Activated CD4-positive, alpha-beta memory T cell treated with anti-CD3 and anti-CD28 coated beads, Interleukin-2, amount 10 ng/mL, durations not matched to agents 7 days and 5 days (primary cell): ENCODE measurements at regions of chr19 and their contacts with region 1.

Region 1: GRCh38 chr19:2261438-2262172 is 5.4 kb upstream of the JSRP1 start:
- DNase-seq: peak; percentile 76
- H3K4me3 Mint-ChIP-seq: no peak overlapping the region
- H3K27ac Mint-ChIP-seq: peak overlapping the region; percentile 48
- H3K4me1 Mint-ChIP-seq: peaks cover 41% of the 10 kb centered on the region
- H3K27me3 Mint-ChIP-seq: no peaks in the 10 kb centered on the region

Region 2: GRCh38 chr19:2070436-2070827 is 191.2 kb before region 1 on chr19:
- CTCF ChIA-PET with region 1: no interaction called
- POLR2A ChIA-PET with region 1: no interaction called
- DNase-seq: no peak
- H3K4me3 Mint-ChIP-seq: no peak overlapping the region
- H3K27ac Mint-ChIP-seq: no peak overlapping the region
- H3K4me1 Mint-ChIP-seq: peaks cover 25% of the 10 kb centered on the region
- H3K27me3 Mint-ChIP-seq: no peaks in the 10 kb centered on the region

Region 3: GRCh38 chr19:2151339-2152229 is 110.0 kb before region 1 on chr19 and contains the start of gene AP3D1:
- CTCF ChIA-PET with region 1: interaction called, 11 read pairs
- POLR2A ChIA-PET with region 1: no interaction called
- DNase-seq: peak; percentile 100
- H3K4me3 Mint-ChIP-seq: peak within 1 kb of the TSS; percentile 72
- H3K27ac Mint-ChIP-seq: peak within 1 kb of the TSS; percentile 73
- H3K4me1 Mint-ChIP-seq: peaks cover 54% of the 10 kb centered on the region
- H3K27me3 Mint-ChIP-seq: no peaks in the 10 kb centered on the region
- total RNA-seq, gene AP3D1: 104 to 105 TPM

Region 4: DNA sequence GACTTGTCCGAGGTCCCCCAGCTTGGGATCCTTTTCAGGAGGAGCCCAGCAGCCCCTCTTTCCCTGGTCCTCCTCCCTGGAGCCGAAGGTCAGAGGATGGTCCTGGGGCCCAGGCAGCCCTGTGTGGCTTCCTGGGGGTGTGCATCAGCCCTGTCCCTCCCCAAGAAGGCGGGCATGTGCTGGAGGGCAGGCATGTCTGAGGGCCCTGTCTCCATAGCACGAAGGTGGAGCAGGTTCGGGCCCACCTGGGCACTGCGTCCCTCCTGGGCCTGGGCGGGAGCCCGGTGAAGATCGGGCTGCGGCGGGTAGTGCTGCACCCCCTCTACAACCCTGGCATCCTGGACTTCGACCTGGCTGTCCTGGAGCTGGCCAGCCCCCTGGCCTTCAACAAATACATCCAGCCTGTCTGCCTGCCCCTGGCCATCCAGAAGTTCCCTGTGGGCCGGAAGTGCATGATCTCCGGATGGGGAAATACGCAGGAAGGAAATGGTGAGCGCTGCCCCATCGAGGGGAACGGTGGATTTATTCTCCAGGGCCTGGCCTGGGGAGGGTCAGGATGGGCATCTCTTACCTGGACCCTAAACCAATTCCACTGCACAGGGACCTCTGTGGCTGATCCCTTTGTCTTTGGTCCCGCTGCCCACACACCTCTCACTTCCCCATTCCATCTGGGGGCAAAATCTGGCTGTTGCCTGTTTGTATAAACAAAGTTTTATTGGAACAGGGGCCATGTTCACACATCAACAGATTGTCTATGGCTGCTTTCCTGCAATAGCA is 154.9 kb after region 1 on chr19:
- CTCF ChIA-PET with region 1: no interaction called
- POLR2A ChIA-PET with region 1: no interaction called
- DNase-seq: no peak
- H3K4me3 Mint-ChIP-seq: no peak overlapping the region
- H3K27ac Mint-ChIP-seq: no peak overlapping the region
- H3K4me1 Mint-ChIP-seq: no peaks in the 10 kb centered on the region
- H3K27me3 Mint-ChIP-seq: no peaks in the 10 kb centered on the region